ENCODE measurements at regions of chr3 and their contacts with region 1.

Region 1: DNA sequence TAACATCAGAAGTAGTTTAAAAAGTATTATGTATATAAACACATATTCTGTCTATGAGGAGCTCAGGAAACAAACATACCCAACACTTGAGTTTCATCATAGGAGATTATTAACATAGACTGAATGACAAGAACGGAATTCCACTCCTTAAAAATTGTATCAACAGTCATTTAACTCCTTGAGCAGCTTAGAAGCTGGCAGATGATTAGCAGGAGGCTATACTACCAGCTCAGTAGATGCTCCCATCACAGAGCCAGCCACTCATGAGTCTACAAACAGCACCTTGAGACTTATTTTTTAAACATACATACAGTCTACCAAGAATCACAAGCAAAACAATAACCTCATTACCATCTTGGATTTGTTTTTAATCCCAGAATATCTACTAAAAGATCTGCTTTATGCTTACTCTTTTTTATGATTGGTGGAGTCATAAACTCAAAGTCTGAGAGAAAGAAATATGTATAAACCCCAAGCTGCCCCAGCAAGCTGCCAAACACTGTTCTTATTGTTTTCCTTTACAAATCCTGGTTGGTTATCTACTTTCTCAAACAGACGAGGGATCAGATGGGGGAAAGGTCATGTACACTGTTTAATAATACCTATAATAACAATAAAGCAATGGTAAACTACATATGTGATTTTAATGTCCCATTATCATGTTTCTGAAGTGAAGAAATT is 59.5 kb downstream of the CBLB start:
- DNase-seq: no peak
- ATAC-seq: no peak
- H3K4me3 ChIP-seq: no peak overlapping the region
- H3K4me3 Mint-ChIP-seq: no peak overlapping the region
- H3K27ac ChIP-seq: no peak overlapping the region
- H3K27ac Mint-ChIP-seq: no peak overlapping the region
- H3K4me1 ChIP-seq: peaks cover 9 to 11% of the 10 kb centered on the region in 2 donors
- H3K4me1 Mint-ChIP-seq: peaks cover 35% of the 10 kb centered on the region
- H3K27me3 ChIP-seq: no peaks in the 10 kb centered on the region
- H3K27me3 Mint-ChIP-seq: no peaks in the 10 kb centered on the region
- CTCF ChIP-seq: no peak

Region 2: DNA sequence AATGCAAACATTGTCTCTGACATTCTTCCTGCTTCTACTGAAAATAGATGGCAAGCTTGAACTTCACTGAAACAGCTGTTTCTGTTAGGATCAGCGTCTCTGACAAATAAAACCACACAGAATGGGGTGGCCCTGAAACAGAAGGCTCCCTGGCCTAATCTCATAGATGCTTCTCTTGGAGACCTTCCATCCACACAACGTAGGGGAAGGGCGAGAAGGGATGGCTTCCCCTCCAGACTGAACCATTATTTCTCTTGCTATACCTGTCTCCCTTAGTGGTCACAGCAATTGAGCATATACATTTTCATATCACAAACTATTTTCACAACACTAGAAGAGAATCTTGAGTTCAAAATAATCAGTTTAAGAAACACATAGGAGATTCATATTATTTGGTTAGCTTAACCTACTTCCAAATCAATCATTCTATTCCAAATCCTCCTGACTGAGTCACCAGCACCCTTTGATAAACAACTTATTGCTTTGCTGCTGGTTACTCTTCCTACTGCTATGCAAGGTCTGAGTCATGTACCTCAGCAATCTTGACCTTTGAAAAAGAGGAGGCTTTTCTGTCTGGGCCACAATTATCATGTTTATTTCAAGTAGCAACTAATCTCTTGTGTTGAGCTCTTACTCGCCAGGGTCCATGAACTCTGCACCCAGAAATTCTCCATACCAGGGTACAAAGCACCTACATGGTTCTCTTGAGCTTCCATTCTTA is 14.0 kb after region 1 on chr3:
- CTCF ChIA-PET with region 1: interaction called, 3 read pairs
- POLR2A ChIA-PET with region 1: no interaction called
- intact Hi-C with region 1: loop called (anchors 2 kb)
- DNase-seq: no peak
- ATAC-seq: peak; percentile 49
- H3K4me3 ChIP-seq: no peak overlapping the region
- H3K4me3 Mint-ChIP-seq: peak overlapping the region; percentile 48
- H3K27ac ChIP-seq: no peak overlapping the region
- H3K27ac Mint-ChIP-seq: peak overlapping the region; percentile 59
- H3K4me1 ChIP-seq: peaks cover 27 to 32% of the 10 kb centered on the region in 2 donors
- H3K4me1 Mint-ChIP-seq: peaks cover 60% of the 10 kb centered on the region
- H3K27me3 ChIP-seq: no peaks in the 10 kb centered on the region
- H3K27me3 Mint-ChIP-seq: no peaks in the 10 kb centered on the region
- CTCF ChIP-seq: no peak

Region 3: GRCh38 chr3:105853801-105854432 is 44.6 kb after region 1 on chr3:
- CTCF ChIA-PET with region 1: no interaction called
- POLR2A ChIA-PET with region 1: no interaction called
- intact Hi-C with region 1: no loop called
- DNase-seq: peak; percentile 91
- ATAC-seq: peak; percentile 99
- H3K4me3 ChIP-seq: peak overlapping the region in 1 of 5 experiments; percentile 5
- H3K4me3 Mint-ChIP-seq: peak overlapping the region; percentile 74
- H3K27ac ChIP-seq: peak overlapping the region; percentile 94 to 95
- H3K27ac Mint-ChIP-seq: peak overlapping the region; percentile 97
- H3K4me1 ChIP-seq: peaks cover 43 to 49% of the 10 kb centered on the region in 2 donors
- H3K4me1 Mint-ChIP-seq: peaks cover 53% of the 10 kb centered on the region
- H3K27me3 ChIP-seq: no peaks in the 10 kb centered on the region
- H3K27me3 Mint-ChIP-seq: no peaks in the 10 kb centered on the region
- CTCF ChIP-seq: peak; percentile 20

Region 4: GRCh38 chr3:105938101-105938500 is 128.8 kb after region 1 on chr3:
- CTCF ChIA-PET with region 1: no interaction called
- POLR2A ChIA-PET with region 1: no interaction called
- intact Hi-C with region 1: no loop called
- DNase-seq: no peak
- ATAC-seq: no peak
- H3K4me3 ChIP-seq: no peak overlapping the region
- H3K4me3 Mint-ChIP-seq: no peak overlapping the region
- H3K27ac ChIP-seq: no peak overlapping the region
- H3K27ac Mint-ChIP-seq: no peak overlapping the region
- H3K4me1 ChIP-seq: no peaks in the 10 kb centered on the region
- H3K4me1 Mint-ChIP-seq: no peaks in the 10 kb centered on the region
- H3K27me3 ChIP-seq: no peaks in the 10 kb centered on the region
- H3K27me3 Mint-ChIP-seq: no peaks in the 10 kb centered on the region
- CTCF ChIP-seq: no peak

Region 5: GRCh38 chr3:106392915-106393314 is 583.6 kb after region 1 on chr3:
- CTCF ChIA-PET with region 1: no interaction called
- POLR2A ChIA-PET with region 1: no interaction called
- intact Hi-C with region 1: no loop called
- DNase-seq: no peak
- ATAC-seq: no peak
- H3K4me3 ChIP-seq: no peak overlapping the region
- H3K4me3 Mint-ChIP-seq: no peak overlapping the region
- H3K27ac ChIP-seq: no peak overlapping the region
- H3K27ac Mint-ChIP-seq: no peak overlapping the region
- H3K4me1 ChIP-seq: peaks cover 3% of the 10 kb centered on the region in 2 donors
- H3K4me1 Mint-ChIP-seq: peaks cover 4% of the 10 kb centered on the region
- H3K27me3 ChIP-seq: no peaks in the 10 kb centered on the region
- H3K27me3 Mint-ChIP-seq: no peaks in the 10 kb centered on the region
- CTCF ChIP-seq: no peak